CD14-positive monocyte (primary cell): ENCODE measurements at regions of chr17 and their contacts with region 1.

Region 1: GRCh38 chr17:49763735-49764558 is at the start of gene FAM117A:
- DNase-seq: peak; percentile 92 to 94 (median 93)
- H3K4me3 ChIP-seq: peak within 1 kb of the TSS; percentile 71 to 97 (median 82)
- H3K4me3 Mint-ChIP-seq: peak within 1 kb of the TSS; percentile 92 to 96
- H3K27ac ChIP-seq: peak within 1 kb of the TSS; percentile 19 to 60
- H3K27ac Mint-ChIP-seq: peak within 1 kb of the TSS; percentile 85 to 93 (median 88)
- H3K4me1 ChIP-seq: peaks cover 32 to 50% of the 10 kb centered on the region in 2 donors
- H3K4me1 Mint-ChIP-seq: peaks cover 49% of the 10 kb centered on the region
- H3K27me3 ChIP-seq: no peaks in the 10 kb centered on the region
- H3K27me3 Mint-ChIP-seq: peaks cover 0 to 3% (median 0%) of the 10 kb centered on the region in 3 donors
- CTCF ChIP-seq: no peak
- polyA plus RNA-seq, gene FAM117A: 11.8 to 34.9 (median 17.9) TPM

Region 2: DNA sequence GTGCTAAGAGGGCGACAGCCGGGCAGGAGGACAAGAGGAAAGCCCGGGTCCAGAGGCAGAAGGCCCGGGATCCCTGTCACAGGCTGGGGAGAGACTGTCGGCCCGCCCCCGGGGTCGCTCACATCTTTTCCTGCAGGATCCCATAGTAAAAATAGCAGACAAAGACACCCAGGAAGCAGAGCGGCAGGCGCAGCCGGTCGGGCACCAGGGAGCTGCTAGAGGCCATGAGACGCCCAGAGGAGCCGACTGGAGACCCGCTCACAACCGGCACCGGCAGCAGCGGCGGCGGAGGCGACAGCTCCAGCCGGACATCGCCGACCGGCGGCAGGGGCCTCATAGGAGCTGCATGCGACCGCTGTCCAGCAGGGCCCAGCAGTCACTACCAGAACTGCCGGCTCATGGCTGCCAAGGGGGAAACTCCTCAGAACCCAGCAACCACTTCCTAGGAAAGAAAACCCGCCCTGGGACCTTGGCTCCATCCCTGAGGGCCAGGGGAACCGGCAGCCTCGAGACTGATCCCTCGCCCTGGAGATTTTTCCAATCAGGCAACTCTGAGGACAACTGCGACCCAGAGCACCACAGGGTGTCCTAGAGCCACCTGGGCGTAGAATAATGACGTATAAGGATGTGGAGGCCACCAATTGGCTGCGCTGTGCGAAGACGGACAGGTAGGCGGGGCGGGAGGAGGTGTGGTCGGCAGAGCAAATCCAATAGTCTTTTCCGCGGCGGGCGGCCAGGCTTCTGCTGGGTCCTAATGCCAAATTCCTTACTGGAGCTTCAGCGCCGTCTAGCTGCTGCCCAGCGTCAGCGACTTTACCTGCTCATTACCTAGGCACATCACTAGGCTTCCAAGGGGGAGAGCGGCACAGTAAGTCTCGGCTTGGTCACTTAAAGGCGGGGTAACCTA is 56.1 kb before region 1 on chr17 and contains the start of gene SLC35B1:
- intact Hi-C with region 1: loop called in 1 of 2 experiments (anchors 2 kb)
- DNase-seq: peak; percentile 97 to 98 (median 98)
- H3K4me3 ChIP-seq: peak within 1 kb of the TSS; percentile 78 to 96 (median 94)
- H3K4me3 Mint-ChIP-seq: peak within 1 kb of the TSS; percentile 90 to 93
- H3K27ac ChIP-seq: peak within 1 kb of the TSS; percentile 65 to 99
- H3K27ac Mint-ChIP-seq: peak within 1 kb of the TSS; percentile 96 to 99 (median 99)
- H3K4me1 ChIP-seq: peaks cover 23 to 30% of the 10 kb centered on the region in 2 donors
- H3K4me1 Mint-ChIP-seq: peaks cover 29% of the 10 kb centered on the region
- H3K27me3 ChIP-seq: no peaks in the 10 kb centered on the region
- H3K27me3 Mint-ChIP-seq: no peaks in the 10 kb centered on the region
- CTCF ChIP-seq: peak; percentile 70
- polyA plus RNA-seq, gene SLC35B1: 56.0 to 61.0 (median 58.8) TPM

Region 3: GRCh38 chr17:49729069-49729468 is 34.9 kb before region 1 on chr17:
- intact Hi-C with region 1: loop called in 1 of 2 experiments (anchors 5 kb)
- DNase-seq: no peak
- H3K4me3 ChIP-seq: peak overlapping the region in 1 of 3 experiments; percentile 37
- H3K4me3 Mint-ChIP-seq: no peak overlapping the region
- H3K27ac ChIP-seq: peak overlapping the region; percentile 51 to 59
- H3K27ac Mint-ChIP-seq: peak overlapping the region; percentile 66 to 93 (median 80)
- H3K4me1 ChIP-seq: peaks cover 20 to 36% of the 10 kb centered on the region in 2 donors
- H3K4me1 Mint-ChIP-seq: peaks cover 56% of the 10 kb centered on the region
- H3K27me3 ChIP-seq: no peaks in the 10 kb centered on the region
- H3K27me3 Mint-ChIP-seq: no peaks in the 10 kb centered on the region
- CTCF ChIP-seq: no peak

Region 4: GRCh38 chr17:49739641-49740271 is 24.2 kb before region 1 on chr17:
- intact Hi-C with region 1: loop called in 1 of 2 experiments (anchors 2 kb)
- DNase-seq: peak; percentile 81 to 90 (median 89)
- H3K4me3 ChIP-seq: peak overlapping the region; percentile 29 to 60 (median 38)
- H3K4me3 Mint-ChIP-seq: peak overlapping the region; percentile 77 to 90
- H3K27ac ChIP-seq: peak overlapping the region; percentile 94 to 98
- H3K27ac Mint-ChIP-seq: peak overlapping the region; percentile 98 to 100 (median 99)
- H3K4me1 ChIP-seq: peaks cover 90 to 95% of the 10 kb centered on the region in 2 donors
- H3K4me1 Mint-ChIP-seq: peaks cover 84% of the 10 kb centered on the region
- H3K27me3 ChIP-seq: no peaks in the 10 kb centered on the region
- H3K27me3 Mint-ChIP-seq: peaks cover 0 to 3% (median 2%) of the 10 kb centered on the region in 3 donors
- CTCF ChIP-seq: no peak